HCT116 (cell line): ENCODE measurements at regions of chr5 and their contacts with region 1.

Region 1: GRCh38 chr5:52948418-52949076 is 40.6 kb upstream of the ITGA2 start:
- DNase-seq: peak; percentile 71
- ATAC-seq: peak; percentile 99
- H3K4me3 ChIP-seq: no peak overlapping the region
- H3K27ac ChIP-seq: no peak overlapping the region
- H3K4me1 ChIP-seq: peaks cover 0 to 6% of the 10 kb centered on the region in 2 experiments; a peak in 1 of 4 replicates
- H3K27me3 ChIP-seq: no peaks in the 10 kb centered on the region
- CTCF ChIP-seq: peak; percentile 77 to 92 (median 90)
- POLR2A ChIP-seq: no peak
- RAD21 ChIP-seq: peak; percentile 94

Region 2: DNA sequence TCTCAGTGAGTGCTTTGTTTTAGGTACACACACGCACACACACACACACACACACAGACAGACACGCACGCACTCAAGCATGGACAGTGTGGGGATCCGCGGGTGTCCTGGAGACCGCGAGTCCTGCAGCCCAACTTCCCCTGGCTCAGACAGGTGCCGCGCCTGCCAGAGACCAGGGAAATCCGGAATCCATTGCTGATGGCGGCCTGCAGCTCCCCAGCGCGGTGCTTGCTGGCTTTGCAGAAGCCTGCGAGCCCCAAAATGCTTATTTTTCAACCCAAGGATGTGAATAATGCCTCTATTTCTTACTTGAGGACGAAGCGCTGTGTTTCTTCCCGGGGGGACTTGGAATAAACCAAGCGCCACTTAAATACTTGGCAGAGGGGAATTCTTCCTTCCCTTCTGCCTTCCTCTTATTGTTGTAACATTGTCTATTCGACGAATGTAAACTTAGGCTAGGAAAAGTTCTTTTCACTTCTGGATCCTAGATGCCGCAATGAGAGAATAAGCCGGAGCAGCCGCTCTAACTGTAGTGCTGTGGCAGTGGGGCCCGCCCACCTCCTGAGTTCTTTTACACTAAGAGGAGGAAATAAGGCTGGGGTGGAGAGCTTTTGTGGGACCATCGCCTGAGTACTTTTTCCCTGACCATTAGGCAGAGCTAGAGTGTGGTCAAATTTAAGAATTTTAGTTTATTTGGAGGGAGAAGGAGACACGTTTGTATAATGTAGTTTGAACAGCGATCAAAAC is 41.4 kb after region 1 on chr5:
- CTCF ChIA-PET with region 1: interaction called, 10 read pairs
- POLR2A ChIA-PET with region 1: interaction called, 6 read pairs
- RAD21 ChIA-PET with region 1: interaction called, 3 to 5 read pairs
- intact Hi-C with region 1: no loop called
- DNase-seq: peak; percentile 18
- ATAC-seq: peak; percentile 34
- H3K4me3 ChIP-seq: peak overlapping the region; percentile 84 to 87
- H3K27ac ChIP-seq: peak overlapping the region; percentile 82
- H3K4me1 ChIP-seq: peaks cover 31 to 46% of the 10 kb centered on the region in 2 experiments
- H3K27me3 ChIP-seq: no peaks in the 10 kb centered on the region
- CTCF ChIP-seq: peak in 2 of 3 experiments; percentile 13 to 35; a peak in 2 of 6 replicates
- POLR2A ChIP-seq: no peak
- RAD21 ChIP-seq: peak; percentile 55

Region 3: GRCh38 chr5:53035868-53036381 is 87.4 kb after region 1 on chr5:
- CTCF ChIA-PET with region 1: interaction called, 28 read pairs
- POLR2A ChIA-PET with region 1: interaction called, 3 read pairs
- RAD21 ChIA-PET with region 1: interaction called in 1 of 2 experiments, 5 read pairs
- intact Hi-C with region 1: loop called (anchors 5 kb)
- DNase-seq: no peak
- ATAC-seq: peak; percentile 70
- H3K4me3 ChIP-seq: no peak overlapping the region
- H3K27ac ChIP-seq: no peak overlapping the region
- H3K4me1 ChIP-seq: peaks cover 52 to 76% of the 10 kb centered on the region in 2 experiments
- H3K27me3 ChIP-seq: no peaks in the 10 kb centered on the region
- CTCF ChIP-seq: peak; percentile 14 to 74 (median 61); a peak in 5 of 6 replicates
- POLR2A ChIP-seq: no peak
- RAD21 ChIP-seq: 0 out of 2 replicates have a peak, but pooled peaks have one; percentile 23

Region 4: DNA sequence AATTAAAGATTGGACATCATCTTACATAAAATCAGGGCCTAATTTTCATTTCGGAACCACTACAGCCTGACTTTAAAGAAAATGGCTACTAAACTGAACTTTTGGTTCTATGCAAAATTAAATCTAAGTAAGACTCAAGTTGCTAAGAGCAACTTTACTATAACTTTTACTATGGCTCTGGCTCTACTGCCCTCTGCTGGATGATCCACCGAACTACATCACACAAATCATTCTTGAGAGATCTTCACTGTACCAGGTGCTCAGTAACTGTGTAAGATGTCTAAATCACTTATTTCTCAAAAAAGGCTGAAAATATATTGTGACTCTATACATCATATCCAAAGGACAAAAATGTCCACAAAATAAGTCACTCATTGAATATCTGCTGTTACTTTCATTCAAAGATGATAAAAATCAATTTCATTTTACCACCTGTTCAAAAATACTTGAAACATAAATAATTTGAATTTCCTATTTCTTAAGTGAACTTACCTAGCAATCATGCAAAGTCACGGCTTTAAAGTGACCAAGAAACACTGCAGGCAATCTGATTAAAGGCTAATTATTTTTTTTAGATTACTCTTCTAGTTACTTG is 147.5 kb after region 1 on chr5:
- CTCF ChIA-PET with region 1: interaction called, 83 read pairs
- POLR2A ChIA-PET with region 1: no interaction called
- RAD21 ChIA-PET with region 1: interaction called, 4 to 7 read pairs
- intact Hi-C with region 1: loop called (anchors 1 kb)
- DNase-seq: peak; percentile 49
- ATAC-seq: peak; percentile 75
- H3K4me3 ChIP-seq: no peak overlapping the region
- H3K27ac ChIP-seq: no peak overlapping the region
- H3K4me1 ChIP-seq: peaks cover 2 to 6% of the 10 kb centered on the region in 2 experiments; a peak in 3 of 4 replicates
- H3K27me3 ChIP-seq: no peaks in the 10 kb centered on the region
- CTCF ChIP-seq: peak; percentile 62 to 85 (median 78); a peak in 5 of 6 replicates
- POLR2A ChIP-seq: no peak
- RAD21 ChIP-seq: peak; percentile 73

Region 5: GRCh38 chr5:53114988-53115387 is 166.4 kb after region 1 on chr5:
- CTCF ChIA-PET with region 1: interaction called, 42 read pairs
- POLR2A ChIA-PET with region 1: interaction called, 5 read pairs
- RAD21 ChIA-PET with region 1: interaction called, 4 to 5 read pairs
- intact Hi-C with region 1: no loop called
- DNase-seq: no peak
- ATAC-seq: 0 out of 2 replicates have a peak, but pooled peaks have one; percentile 36
- H3K4me3 ChIP-seq: no peak overlapping the region
- H3K27ac ChIP-seq: no peak overlapping the region
- H3K4me1 ChIP-seq: peaks cover 0 to 9% of the 10 kb centered on the region in 2 experiments; a peak in 1 of 4 replicates
- H3K27me3 ChIP-seq: no peaks in the 10 kb centered on the region
- CTCF ChIP-seq: peak; percentile 34 to 53 (median 34); a peak in 4 of 6 replicates
- POLR2A ChIP-seq: no peak
- RAD21 ChIP-seq: peak; percentile 40; the same call in 1 of the 2 replicates